B cell (primary cell): ENCODE measurements at regions of chr19 and their contacts with region 1.

Region 1: GRCh38 chr19:16111160-16111908 is at the start of gene RAB8A:
- DNase-seq: peak; percentile 100
- ATAC-seq: peak; percentile 88
- H3K4me3 ChIP-seq: peak within 1 kb of the TSS; percentile 50 to 99 (median 96)
- H3K4me3 Mint-ChIP-seq: peak within 1 kb of the TSS; percentile 96
- H3K27ac ChIP-seq: peak within 1 kb of the TSS; percentile 74 to 97
- H3K27ac Mint-ChIP-seq: peak within 1 kb of the TSS; percentile 95
- H3K4me1 ChIP-seq: peaks cover 29 to 53% of the 10 kb centered on the region in 2 donors
- H3K4me1 Mint-ChIP-seq: peaks cover 42% of the 10 kb centered on the region
- H3K27me3 ChIP-seq: no peaks in the 10 kb centered on the region
- H3K27me3 Mint-ChIP-seq: no peaks in the 10 kb centered on the region
- CTCF ChIP-seq: peak; percentile 91
- total RNA-seq, gene RAB8A: 115 and 117 TPM in 2 replicates

Region 2: DNA sequence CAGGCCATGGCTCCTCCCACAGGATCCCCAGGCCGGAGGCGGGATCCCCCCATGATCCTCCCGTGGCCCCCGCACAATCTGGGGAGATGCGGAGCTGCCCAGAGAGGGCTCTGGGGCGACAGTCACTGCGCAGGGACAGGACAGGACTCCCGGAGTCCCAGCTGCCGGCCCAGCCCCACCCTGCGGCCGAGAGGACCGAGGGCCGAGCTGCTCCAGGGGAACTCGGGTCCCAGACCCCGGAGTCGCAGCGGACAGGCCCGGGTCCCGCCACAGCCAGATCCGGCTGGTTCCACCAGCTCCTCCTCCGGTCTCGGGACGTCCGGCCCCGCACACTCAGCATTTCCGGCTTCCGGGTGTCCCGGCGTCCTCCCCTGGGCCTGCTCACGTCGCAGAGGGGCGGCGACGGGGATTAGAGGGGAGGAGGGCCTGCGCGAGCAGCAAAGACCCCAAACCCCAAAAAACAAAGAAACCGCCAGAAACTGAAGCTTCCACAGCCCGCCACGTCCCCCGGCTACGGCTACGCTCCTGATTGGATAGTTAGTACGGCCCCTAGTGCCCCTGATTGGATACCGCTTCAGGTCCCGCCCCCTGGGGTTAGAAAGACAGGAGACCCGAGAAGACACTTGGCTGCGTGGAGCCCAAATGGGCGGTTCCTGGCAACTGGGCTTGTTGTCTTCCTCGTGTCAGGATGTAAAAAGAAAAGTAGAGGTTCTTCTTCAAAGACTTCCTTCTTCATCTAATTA is 274.6 kb before region 1 on chr19:
- CTCF ChIA-PET with region 1: no interaction called
- POLR2A ChIA-PET with region 1: no interaction called
- intact Hi-C with region 1: loop called (anchors 2 kb)
- DNase-seq: peak; percentile 95
- ATAC-seq: peak; percentile 96
- H3K4me3 ChIP-seq: peak overlapping the region; percentile 83 to 98 (median 90)
- H3K4me3 Mint-ChIP-seq: peak overlapping the region; percentile 93
- H3K27ac ChIP-seq: peak overlapping the region; percentile 96 to 99
- H3K27ac Mint-ChIP-seq: peak overlapping the region; percentile 98
- H3K4me1 ChIP-seq: peaks cover 7 to 8% of the 10 kb centered on the region in 2 donors
- H3K4me1 Mint-ChIP-seq: peaks cover 12% of the 10 kb centered on the region
- H3K27me3 ChIP-seq: no peaks in the 10 kb centered on the region
- H3K27me3 Mint-ChIP-seq: no peaks in the 10 kb centered on the region
- CTCF ChIP-seq: no peak

Region 3: GRCh38 chr19:16041299-16041990 is 69.9 kb before region 1 on chr19:
- CTCF ChIA-PET with region 1: interaction called, 18 read pairs
- POLR2A ChIA-PET with region 1: no interaction called
- intact Hi-C with region 1: loop called (anchors 1 kb)
- DNase-seq: peak; percentile 80
- ATAC-seq: peak; percentile 86
- H3K4me3 ChIP-seq: no peak overlapping the region
- H3K4me3 Mint-ChIP-seq: no peak overlapping the region
- H3K27ac ChIP-seq: no peak overlapping the region
- H3K27ac Mint-ChIP-seq: no peak overlapping the region
- H3K4me1 ChIP-seq: peaks cover 7 to 8% of the 10 kb centered on the region in 2 donors
- H3K4me1 Mint-ChIP-seq: peaks cover 10% of the 10 kb centered on the region
- H3K27me3 ChIP-seq: peaks cover 0 to 4% (median 0%) of the 10 kb centered on the region in 4 experiments
- H3K27me3 Mint-ChIP-seq: no peaks in the 10 kb centered on the region
- CTCF ChIP-seq: peak; percentile 95

Region 4: GRCh38 chr19:16070366-16070990 is 40.9 kb before region 1 on chr19:
- CTCF ChIA-PET with region 1: interaction called, 13 read pairs
- POLR2A ChIA-PET with region 1: interaction called, 10 read pairs
- intact Hi-C with region 1: loop called (anchors 1 kb)
- DNase-seq: peak; percentile 95
- ATAC-seq: peak; percentile 91
- H3K4me3 ChIP-seq: peak overlapping the region in 4 of 5 experiments; percentile 30 to 56 (median 43)
- H3K4me3 Mint-ChIP-seq: no peak overlapping the region
- H3K27ac ChIP-seq: peak overlapping the region; percentile 96 to 98
- H3K27ac Mint-ChIP-seq: no peak overlapping the region
- H3K4me1 ChIP-seq: peaks cover 23 to 42% of the 10 kb centered on the region in 2 donors
- H3K4me1 Mint-ChIP-seq: peaks cover 26% of the 10 kb centered on the region
- H3K27me3 ChIP-seq: no peaks in the 10 kb centered on the region
- H3K27me3 Mint-ChIP-seq: no peaks in the 10 kb centered on the region
- CTCF ChIP-seq: peak; percentile 37

Region 5: GRCh38 chr19:16076154-16076957 is 35.0 kb before region 1 on chr19 and contains the start of gene TPM4:
- CTCF ChIA-PET with region 1: interaction called, 13 read pairs
- POLR2A ChIA-PET with region 1: interaction called, 9 read pairs
- intact Hi-C with region 1: loop called (anchors 1 kb)
- DNase-seq: peak; percentile 93
- ATAC-seq: peak; percentile 60
- H3K4me3 ChIP-seq: peak within 1 kb of the TSS; percentile 56 to 86 (median 73)
- H3K4me3 Mint-ChIP-seq: peak within 1 kb of the TSS; percentile 88
- H3K27ac ChIP-seq: peak within 1 kb of the TSS; percentile 91 to 92
- H3K27ac Mint-ChIP-seq: peak within 1 kb of the TSS; percentile 94
- H3K4me1 ChIP-seq: peaks cover 35 to 56% of the 10 kb centered on the region in 2 donors
- H3K4me1 Mint-ChIP-seq: peaks cover 60% of the 10 kb centered on the region
- H3K27me3 ChIP-seq: no peaks in the 10 kb centered on the region
- H3K27me3 Mint-ChIP-seq: no peaks in the 10 kb centered on the region
- CTCF ChIP-seq: no peak
- total RNA-seq, gene TPM4: 127 TPM in 2 replicates

Region 6: GRCh38 chr19:16197622-16198369 is 86.5 kb after region 1 on chr19 and contains the start of gene AP1M1:
- CTCF ChIA-PET with region 1: no interaction called
- POLR2A ChIA-PET with region 1: no interaction called
- intact Hi-C with region 1: loop called (anchors 1 kb)
- DNase-seq: peak; percentile 99
- ATAC-seq: peak; percentile 93
- H3K4me3 ChIP-seq: peak within 1 kb of the TSS; percentile 67 to 92 (median 87)
- H3K4me3 Mint-ChIP-seq: peak within 1 kb of the TSS; percentile 93
- H3K27ac ChIP-seq: peak within 1 kb of the TSS; percentile 66 to 92
- H3K27ac Mint-ChIP-seq: peak within 1 kb of the TSS; percentile 98
- H3K4me1 ChIP-seq: peaks cover 18 to 28% of the 10 kb centered on the region in 2 donors
- H3K4me1 Mint-ChIP-seq: peaks cover 35% of the 10 kb centered on the region
- H3K27me3 ChIP-seq: no peaks in the 10 kb centered on the region
- H3K27me3 Mint-ChIP-seq: no peaks in the 10 kb centered on the region
- CTCF ChIP-seq: no peak
- total RNA-seq, gene AP1M1: 90.4 and 102 TPM in 2 replicates